ENCODE measurements at regions of chr17 and their contacts with region 1.

Region 1: GRCh38 chr17:34579017-34579946 is at the start of gene TMEM132E:
- DNase-seq: peak; percentile 44
- ATAC-seq: peak; percentile 40
- H3K4me3 Mint-ChIP-seq: peak within 1 kb of the TSS; percentile 64
- H3K27ac Mint-ChIP-seq: no peak within 1 kb of the TSS
- H3K4me1 Mint-ChIP-seq: peaks cover 10% of the 10 kb centered on the region
- H3K27me3 Mint-ChIP-seq: peaks cover 67% of the 10 kb centered on the region
- total RNA-seq, gene TMEM132E: not detected

Region 2: GRCh38 chr17:34503528-34504145 is 75.6 kb before region 1 on chr17:
- CTCF ChIA-PET with region 1: no interaction called
- POLR2A ChIA-PET with region 1: no interaction called
- intact Hi-C with region 1: loop called in 1 of 2 experiments (anchors 10 kb)
- DNase-seq: peak; percentile 30
- ATAC-seq: peak; percentile 55
- H3K4me3 Mint-ChIP-seq: no peak overlapping the region
- H3K27ac Mint-ChIP-seq: no peak overlapping the region
- H3K4me1 Mint-ChIP-seq: peaks cover 11% of the 10 kb centered on the region
- H3K27me3 Mint-ChIP-seq: peaks cover 40% of the 10 kb centered on the region

Region 3: GRCh38 chr17:34740565-34741520 is 161.6 kb after region 1 on chr17:
- CTCF ChIA-PET with region 1: no interaction called
- POLR2A ChIA-PET with region 1: no interaction called
- intact Hi-C with region 1: no loop called
- DNase-seq: no peak
- ATAC-seq: no peak
- H3K4me3 Mint-ChIP-seq: no peak overlapping the region
- H3K27ac Mint-ChIP-seq: no peak overlapping the region
- H3K4me1 Mint-ChIP-seq: no peaks in the 10 kb centered on the region
- H3K27me3 Mint-ChIP-seq: peaks cover 16% of the 10 kb centered on the region